Activated CD4-positive, alpha-beta T cell treated with anti-CD3 and anti-CD28 coated beads, Interleukin-2, amount 10 ng/mL, durations not matched to agents 24 days and 14 days (primary cell): ENCODE measurements at regions of chrX and their contacts with region 1.

Region 1: GRCh38 chrX:136147315-136147901 is at the start of gene FHL1:
- DNase-seq: peak; percentile 83
- H3K4me3 Mint-ChIP-seq: peak within 1 kb of the TSS; percentile 85
- H3K27ac Mint-ChIP-seq: peak within 1 kb of the TSS; percentile 70
- H3K4me1 Mint-ChIP-seq: peaks cover 15% of the 10 kb centered on the region
- H3K27me3 Mint-ChIP-seq: peaks cover 5% of the 10 kb centered on the region
- total RNA-seq, gene FHL1: 14.0 and 15.2 TPM in 2 replicates

Region 2: GRCh38 chrX:136065044-136065671 is 82.2 kb before region 1 on chrX:
- intact Hi-C with region 1: no loop called
- DNase-seq: peak; percentile 73
- H3K4me3 Mint-ChIP-seq: peak overlapping the region; percentile 26
- H3K27ac Mint-ChIP-seq: peak overlapping the region; percentile 0
- H3K4me1 Mint-ChIP-seq: peaks cover 14% of the 10 kb centered on the region
- H3K27me3 Mint-ChIP-seq: no peaks in the 10 kb centered on the region

Region 3: DNA sequence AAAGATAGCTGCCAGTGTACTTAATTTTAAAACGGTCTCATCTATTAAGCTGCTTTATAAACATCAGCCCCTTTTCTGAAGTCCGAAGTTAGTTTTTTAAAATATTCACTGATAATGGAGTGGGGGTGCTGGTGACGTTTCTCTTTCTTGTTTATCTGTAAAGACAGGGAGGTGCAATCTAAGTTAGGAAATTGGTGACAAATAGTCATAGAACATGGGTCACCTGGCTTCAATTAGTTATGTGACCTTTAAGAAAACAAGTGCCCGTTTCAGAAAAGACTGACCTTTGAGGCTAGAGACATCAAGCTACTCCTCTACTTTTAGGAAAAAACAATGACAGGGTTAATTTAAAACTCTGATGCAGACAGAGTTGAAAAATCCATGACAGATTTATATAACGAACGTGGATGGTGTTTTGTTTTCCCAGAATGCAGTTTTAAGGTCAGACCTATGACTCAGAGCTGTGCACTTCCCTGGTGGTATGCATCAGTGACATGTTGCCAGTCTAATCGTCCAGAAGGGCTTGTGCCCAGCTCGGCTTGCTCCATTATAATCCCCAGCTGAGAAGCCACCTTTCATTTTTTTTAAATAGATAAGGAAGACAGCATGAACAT is 38.1 kb after region 1 on chrX:
- intact Hi-C with region 1: no loop called
- DNase-seq: no peak
- H3K4me3 Mint-ChIP-seq: no peak overlapping the region
- H3K27ac Mint-ChIP-seq: no peak overlapping the region
- H3K4me1 Mint-ChIP-seq: peaks cover 2% of the 10 kb centered on the region
- H3K27me3 Mint-ChIP-seq: no peaks in the 10 kb centered on the region

Region 4: DNA sequence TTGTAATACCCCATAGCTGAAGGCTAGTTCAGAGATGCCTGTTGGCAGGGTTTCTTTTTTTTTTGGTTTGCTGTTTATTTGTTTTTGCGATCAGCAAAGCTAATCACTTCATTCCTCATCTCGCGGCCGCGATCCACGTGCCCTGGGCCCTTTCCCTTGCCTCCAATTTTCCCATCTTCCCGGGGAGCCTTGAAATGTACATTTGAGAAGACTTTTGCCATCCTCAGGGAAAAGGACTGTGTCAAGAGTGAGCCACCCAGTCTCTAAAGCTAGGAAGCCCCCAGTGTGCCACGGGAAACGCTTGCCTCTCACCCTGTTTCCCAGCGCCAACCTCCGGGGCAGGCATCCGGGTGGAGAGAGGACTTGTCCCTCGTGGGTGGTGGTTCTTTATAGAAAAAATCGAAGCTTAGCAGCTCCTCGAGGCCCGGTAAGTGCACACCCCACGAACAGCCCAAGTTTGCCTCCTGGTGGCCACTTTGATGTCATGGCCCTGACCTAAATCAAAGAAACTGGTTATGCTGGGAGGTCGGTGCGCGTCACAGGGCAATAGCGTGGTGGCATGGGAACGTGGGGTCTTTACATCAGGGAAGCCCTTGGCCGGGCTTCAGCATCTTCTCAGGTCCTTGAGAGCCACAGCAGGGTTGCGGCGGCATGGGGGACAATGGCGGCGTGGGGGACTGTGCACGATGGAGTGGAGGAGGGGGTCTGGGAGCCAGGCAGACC is 61.8 kb after region 1 on chrX:
- intact Hi-C with region 1: loop called (anchors 10 kb)
- DNase-seq: peak; percentile 75
- H3K4me3 Mint-ChIP-seq: no peak overlapping the region
- H3K27ac Mint-ChIP-seq: no peak overlapping the region
- H3K4me1 Mint-ChIP-seq: peaks cover 8% of the 10 kb centered on the region
- H3K27me3 Mint-ChIP-seq: no peaks in the 10 kb centered on the region